RWPE1 (cell line): ENCODE measurements at regions of chr11 and their contacts with region 1.

Region 1: GRCh38 chr11:111777094-111778046 is 11.2 kb upstream of the PPP2R1B start:
- DNase-seq: peak; percentile 57
- H3K27ac ChIP-seq: no peak overlapping the region
- CTCF ChIP-seq: peak; percentile 79

Region 2: DNA sequence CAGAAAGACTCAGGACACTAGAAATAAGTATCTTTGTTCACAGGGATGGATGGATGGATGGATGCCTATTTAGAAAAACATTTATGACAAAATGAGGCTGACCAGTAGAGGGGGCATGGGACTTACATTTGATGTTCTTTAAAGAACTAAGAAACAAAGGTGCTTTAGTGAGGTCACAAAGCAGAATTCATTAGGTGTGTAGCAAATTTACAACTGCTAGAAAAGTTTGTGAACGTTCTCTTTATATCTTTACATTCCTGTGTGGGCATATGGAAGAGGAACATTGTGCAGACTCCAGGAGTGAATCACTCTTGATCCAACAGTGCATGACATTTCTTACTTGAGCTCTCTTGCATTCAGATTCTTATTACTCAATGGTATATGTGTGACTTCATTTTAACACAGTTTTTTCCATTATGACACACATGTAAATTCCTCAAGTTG is 191.0 kb before region 1 on chr11:
- CTCF ChIA-PET with region 1: interaction called, 19 read pairs
- POLR2A ChIA-PET with region 1: no interaction called
- DNase-seq: peak; percentile 45
- H3K27ac ChIP-seq: no peak overlapping the region
- CTCF ChIP-seq: peak; percentile 74

Region 3: DNA sequence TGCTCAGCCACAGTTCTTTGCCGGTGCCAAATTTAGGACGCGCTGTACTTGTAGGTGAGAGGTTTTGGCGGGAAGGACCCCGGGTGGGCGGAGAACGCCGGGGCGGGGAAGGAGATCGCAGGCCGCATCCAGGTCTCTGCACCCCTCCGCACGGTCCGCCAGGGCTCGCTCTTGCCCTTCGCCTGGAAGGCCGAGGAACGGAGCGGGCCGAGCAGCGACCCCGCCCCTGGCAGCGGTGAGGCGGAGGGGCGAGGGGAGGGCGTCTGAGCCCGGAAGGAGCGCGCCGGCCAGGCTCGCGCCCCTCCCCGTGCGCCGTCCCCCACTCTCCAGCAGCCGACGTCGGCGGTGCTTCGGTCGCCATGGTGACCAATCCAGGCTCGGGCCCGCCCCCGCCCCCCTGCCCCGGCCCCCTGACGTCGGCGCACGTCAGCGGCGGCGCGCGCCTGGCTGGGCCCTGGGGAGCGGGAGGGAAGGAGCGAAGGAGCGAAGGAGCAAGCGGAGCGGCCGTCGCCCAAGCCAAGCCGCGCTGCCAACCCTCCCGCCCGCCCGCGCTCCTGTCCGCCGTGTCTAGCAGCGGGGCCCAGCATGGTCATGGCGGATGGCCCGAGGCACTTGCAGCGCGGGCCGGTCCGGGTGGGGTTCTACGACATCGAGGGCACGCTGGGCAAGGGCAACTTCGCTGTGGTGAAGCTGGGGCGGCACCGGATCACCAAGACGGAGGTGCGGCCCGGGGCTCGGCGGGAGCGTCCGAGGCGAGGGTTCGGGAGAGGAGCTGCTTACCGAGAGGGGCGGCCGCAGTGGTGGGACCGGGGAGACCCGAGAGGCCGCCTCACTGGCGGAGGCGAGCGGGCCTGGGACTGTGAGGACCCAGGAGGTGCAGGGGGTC is 175.1 kb before region 1 on chr11 and contains the start of gene SIK2:
- CTCF ChIA-PET with region 1: interaction called, 11 read pairs
- POLR2A ChIA-PET with region 1: no interaction called
- DNase-seq: peak; percentile 92
- H3K27ac ChIP-seq: peak within 1 kb of the TSS; percentile 85
- CTCF ChIP-seq: peak; percentile 94

Region 4: DNA sequence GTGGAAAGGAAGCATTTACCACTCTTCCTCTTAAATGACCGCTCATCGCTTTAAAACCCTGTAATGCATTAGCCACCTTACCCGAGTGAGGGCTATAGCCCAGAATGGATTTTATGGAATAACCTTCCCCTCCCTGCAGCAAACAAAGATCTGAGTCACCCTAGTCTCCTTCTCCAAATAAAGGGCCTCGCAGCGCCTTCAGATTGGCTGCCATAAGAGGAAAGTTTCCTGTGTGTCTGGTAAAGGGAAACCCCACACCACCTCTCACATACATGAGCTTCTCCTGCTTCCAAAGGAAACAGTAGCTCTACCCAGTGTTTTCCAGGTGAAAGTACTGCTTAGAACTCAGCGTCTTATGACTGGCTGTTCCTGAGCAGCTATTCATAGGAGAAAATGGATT is 58.9 kb before region 1 on chr11:
- CTCF ChIA-PET with region 1: no interaction called
- POLR2A ChIA-PET with region 1: interaction called, 13 read pairs
- DNase-seq: peak; percentile 54
- H3K27ac ChIP-seq: peak overlapping the region; percentile 47
- CTCF ChIP-seq: no peak

Region 5: DNA sequence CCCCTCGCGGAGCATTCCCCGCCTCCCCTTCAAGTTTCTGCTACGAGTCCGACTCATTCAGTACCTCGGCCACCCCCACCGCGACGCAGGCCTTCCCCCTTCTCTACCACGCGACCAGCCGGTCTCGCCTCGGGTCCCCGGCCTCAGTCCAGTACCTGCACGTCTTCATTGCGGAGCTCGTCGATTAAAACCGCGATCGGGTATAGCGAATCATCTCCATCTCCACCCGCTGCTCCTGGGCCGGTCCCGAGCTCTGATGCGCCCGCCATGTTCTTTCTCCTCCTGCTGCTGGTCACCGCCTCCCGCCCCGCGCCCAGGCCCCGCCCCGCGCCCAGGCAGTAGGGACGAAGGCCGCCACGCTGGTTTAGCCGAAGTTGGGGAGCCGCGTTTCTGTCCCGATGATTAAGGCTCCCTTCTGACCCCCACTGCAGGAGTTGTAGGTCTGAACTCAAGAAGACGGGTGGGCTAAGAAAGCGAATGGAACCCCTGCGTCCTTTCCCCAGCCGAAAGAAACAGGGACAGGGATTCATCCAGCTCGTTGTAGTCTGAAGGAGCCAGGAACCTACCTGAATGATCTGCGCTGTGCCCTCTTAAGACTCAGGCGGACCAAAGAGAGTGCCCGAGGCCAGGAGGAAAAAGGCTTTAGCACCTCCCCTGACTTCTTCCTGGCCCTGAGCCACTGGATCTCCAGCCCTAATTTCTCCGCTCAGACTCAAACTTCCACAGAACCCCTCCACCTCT is 11.1 kb before region 1 on chr11 and contains the start of gene PPP2R1B:
- CTCF ChIA-PET with region 1: interaction called, 13 read pairs
- POLR2A ChIA-PET with region 1: interaction called, 4 read pairs
- DNase-seq: peak; percentile 90
- H3K27ac ChIP-seq: peak within 1 kb of the TSS; percentile 88
- CTCF ChIP-seq: no peak